ENCODE measurements at regions of chr2 and their contacts with region 1.

Region 1: DNA sequence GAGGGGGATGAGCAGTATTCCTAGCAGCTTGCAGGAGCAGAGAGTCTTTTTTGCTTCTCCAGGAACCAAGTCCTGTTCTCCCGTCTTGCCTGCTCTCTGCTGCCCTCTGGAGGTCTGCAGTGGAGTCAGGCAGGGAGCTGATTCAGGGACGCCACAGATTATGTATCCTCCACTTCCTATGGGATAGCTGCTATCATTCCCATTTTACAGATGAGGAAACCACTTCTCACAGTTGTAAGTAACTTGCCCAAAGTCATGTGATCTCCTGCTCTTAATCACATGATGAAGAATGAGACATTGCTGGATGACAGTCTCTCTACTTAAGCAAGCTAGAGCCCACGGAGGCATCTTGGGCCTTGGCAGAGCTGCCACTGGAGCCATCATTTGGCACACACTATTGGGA is 8.3 kb downstream of the SLC4A5 start:
- DNase-seq: peak; percentile 52 to 84 (median 77)
- ATAC-seq: peak; percentile 85
- H3K4me3 ChIP-seq: no peak overlapping the region
- H3K4me3 Mint-ChIP-seq: no peak overlapping the region
- H3K27ac ChIP-seq: no peak overlapping the region
- H3K27ac Mint-ChIP-seq: no peak overlapping the region
- H3K4me1 ChIP-seq: no peaks in the 10 kb centered on the region
- H3K4me1 Mint-ChIP-seq: peaks cover 3% of the 10 kb centered on the region
- H3K27me3 ChIP-seq: no peaks in the 10 kb centered on the region
- H3K27me3 Mint-ChIP-seq: no peaks in the 10 kb centered on the region
- CTCF ChIP-seq: peak; percentile 94

Region 2: DNA sequence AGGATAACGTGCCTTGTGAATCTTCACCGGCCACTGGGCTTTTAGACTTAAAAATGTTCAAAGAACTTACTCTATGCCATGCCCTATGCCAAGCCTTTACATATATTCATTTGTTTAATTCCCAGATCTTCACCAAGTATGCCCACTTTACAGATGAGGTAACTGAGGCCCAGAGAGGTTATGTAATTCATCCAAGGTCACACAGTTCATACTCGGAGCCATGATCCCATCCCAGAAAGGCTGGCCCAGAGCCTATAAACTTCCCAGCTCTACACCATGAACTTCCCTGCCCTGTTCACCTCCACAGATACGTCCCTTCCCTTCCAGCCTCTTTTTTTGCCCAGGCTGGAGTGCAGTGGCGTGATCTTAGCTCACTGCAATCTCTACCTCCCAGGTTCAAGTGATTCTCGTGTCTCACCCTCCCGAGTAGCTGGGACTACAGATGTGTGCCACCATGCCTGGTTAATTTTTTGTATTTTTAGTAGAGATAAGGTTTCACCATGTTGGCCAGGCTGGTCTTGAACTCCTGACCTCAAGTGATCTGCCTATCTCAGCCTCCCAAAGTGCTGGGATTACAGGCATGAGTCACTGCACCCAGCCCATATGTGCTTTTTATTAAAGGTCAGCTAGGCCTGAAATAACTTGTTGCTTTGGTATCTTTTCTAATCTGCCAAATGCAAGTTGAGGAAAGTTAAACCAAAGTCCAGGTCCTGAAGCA is 92.4 kb before region 1 on chr2:
- CTCF ChIA-PET with region 1: interaction called, 257 read pairs
- POLR2A ChIA-PET with region 1: no interaction called
- intact Hi-C with region 1: no loop called
- DNase-seq: no peak
- ATAC-seq: no peak
- H3K4me3 ChIP-seq: no peak overlapping the region
- H3K4me3 Mint-ChIP-seq: no peak overlapping the region
- H3K27ac ChIP-seq: no peak overlapping the region
- H3K27ac Mint-ChIP-seq: no peak overlapping the region
- H3K4me1 ChIP-seq: no peaks in the 10 kb centered on the region
- H3K4me1 Mint-ChIP-seq: no peaks in the 10 kb centered on the region
- H3K27me3 ChIP-seq: no peaks in the 10 kb centered on the region
- H3K27me3 Mint-ChIP-seq: no peaks in the 10 kb centered on the region
- CTCF ChIP-seq: no peak

Region 3: GRCh38 chr2:74267068-74267467 is 67.9 kb before region 1 on chr2:
- CTCF ChIA-PET with region 1: interaction called, 90 read pairs
- POLR2A ChIA-PET with region 1: no interaction called
- intact Hi-C with region 1: loop called (anchors 1 kb)
- DNase-seq: peak; percentile 13 to 80 (median 54)
- ATAC-seq: peak; percentile 93
- H3K4me3 ChIP-seq: no peak overlapping the region
- H3K4me3 Mint-ChIP-seq: peak overlapping the region; percentile 43
- H3K27ac ChIP-seq: no peak overlapping the region
- H3K27ac Mint-ChIP-seq: peak overlapping the region; percentile 27
- H3K4me1 ChIP-seq: peaks cover 9% of the 10 kb centered on the region
- H3K4me1 Mint-ChIP-seq: peaks cover 12% of the 10 kb centered on the region
- H3K27me3 ChIP-seq: no peaks in the 10 kb centered on the region
- H3K27me3 Mint-ChIP-seq: no peaks in the 10 kb centered on the region
- CTCF ChIP-seq: peak; percentile 60

Region 4: DNA sequence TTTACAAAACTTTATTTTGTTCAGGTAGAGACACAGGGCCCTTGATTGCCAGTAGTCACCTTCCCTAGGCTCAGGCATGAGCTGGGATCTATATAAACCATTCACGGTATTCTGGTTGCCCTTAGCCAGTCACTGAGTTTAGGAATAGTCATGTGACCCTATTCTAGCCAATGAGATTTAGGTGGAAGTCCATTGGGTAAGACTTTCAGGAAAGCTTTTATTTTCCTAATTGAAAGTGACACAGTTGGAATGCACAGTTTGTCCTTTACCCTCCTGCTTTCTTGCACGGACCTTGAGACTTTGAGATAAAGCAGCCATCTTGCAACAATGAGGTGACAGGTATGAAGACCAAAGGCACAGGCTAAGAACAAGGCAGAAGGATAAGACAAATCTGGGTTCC is 13.2 kb before region 1 on chr2:
- CTCF ChIA-PET with region 1: interaction called, 51 read pairs
- POLR2A ChIA-PET with region 1: no interaction called
- intact Hi-C with region 1: no loop called
- DNase-seq: no peak
- ATAC-seq: no peak
- H3K4me3 ChIP-seq: no peak overlapping the region
- H3K4me3 Mint-ChIP-seq: no peak overlapping the region
- H3K27ac ChIP-seq: no peak overlapping the region
- H3K27ac Mint-ChIP-seq: no peak overlapping the region
- H3K4me1 ChIP-seq: no peaks in the 10 kb centered on the region
- H3K4me1 Mint-ChIP-seq: no peaks in the 10 kb centered on the region
- H3K27me3 ChIP-seq: no peaks in the 10 kb centered on the region
- H3K27me3 Mint-ChIP-seq: no peaks in the 10 kb centered on the region
- CTCF ChIP-seq: no peak

Region 5: GRCh38 chr2:74357627-74358026 is 22.7 kb after region 1 on chr2:
- CTCF ChIA-PET with region 1: interaction called, 32 read pairs
- POLR2A ChIA-PET with region 1: no interaction called
- intact Hi-C with region 1: no loop called
- DNase-seq: no peak
- ATAC-seq: no peak
- H3K4me3 ChIP-seq: no peak overlapping the region
- H3K4me3 Mint-ChIP-seq: no peak overlapping the region
- H3K27ac ChIP-seq: no peak overlapping the region
- H3K27ac Mint-ChIP-seq: no peak overlapping the region
- H3K4me1 ChIP-seq: no peaks in the 10 kb centered on the region
- H3K4me1 Mint-ChIP-seq: no peaks in the 10 kb centered on the region
- H3K27me3 ChIP-seq: no peaks in the 10 kb centered on the region
- H3K27me3 Mint-ChIP-seq: no peaks in the 10 kb centered on the region
- CTCF ChIP-seq: no peak

Region 6: GRCh38 chr2:74587664-74588277 is 252.8 kb after region 1 on chr2:
- CTCF ChIA-PET with region 1: interaction called, 10 read pairs
- POLR2A ChIA-PET with region 1: no interaction called
- intact Hi-C with region 1: no loop called
- DNase-seq: peak; percentile 36 to 79 (median 58)
- ATAC-seq: peak; percentile 87
- H3K4me3 ChIP-seq: no peak overlapping the region
- H3K4me3 Mint-ChIP-seq: no peak overlapping the region
- H3K27ac ChIP-seq: no peak overlapping the region
- H3K27ac Mint-ChIP-seq: no peak overlapping the region
- H3K4me1 ChIP-seq: no peaks in the 10 kb centered on the region
- H3K4me1 Mint-ChIP-seq: peaks cover 6% of the 10 kb centered on the region
- H3K27me3 ChIP-seq: no peaks in the 10 kb centered on the region
- H3K27me3 Mint-ChIP-seq: peaks cover 8% of the 10 kb centered on the region
- CTCF ChIP-seq: peak; percentile 52

Measured in CD8-positive, alpha-beta T cell (primary cell).